Head of caudate nucleus (tissue), 42 donors: ENCODE measurements at regions of chr10 and their contacts with region 1.

Region 1: GRCh38 chr10:132536971-132537712 is 445 bp upstream of the INPP5A start:
- DNase-seq: peak; percentile 100

Region 2: GRCh38 chr10:132307823-132308587 is 229.1 kb before region 1 on chr10 and contains the start of gene STK32C:
- intact Hi-C with region 1: loop called (anchors 10 kb)
- DNase-seq: peak; percentile 80 to 98 (median 94)

Region 3: DNA sequence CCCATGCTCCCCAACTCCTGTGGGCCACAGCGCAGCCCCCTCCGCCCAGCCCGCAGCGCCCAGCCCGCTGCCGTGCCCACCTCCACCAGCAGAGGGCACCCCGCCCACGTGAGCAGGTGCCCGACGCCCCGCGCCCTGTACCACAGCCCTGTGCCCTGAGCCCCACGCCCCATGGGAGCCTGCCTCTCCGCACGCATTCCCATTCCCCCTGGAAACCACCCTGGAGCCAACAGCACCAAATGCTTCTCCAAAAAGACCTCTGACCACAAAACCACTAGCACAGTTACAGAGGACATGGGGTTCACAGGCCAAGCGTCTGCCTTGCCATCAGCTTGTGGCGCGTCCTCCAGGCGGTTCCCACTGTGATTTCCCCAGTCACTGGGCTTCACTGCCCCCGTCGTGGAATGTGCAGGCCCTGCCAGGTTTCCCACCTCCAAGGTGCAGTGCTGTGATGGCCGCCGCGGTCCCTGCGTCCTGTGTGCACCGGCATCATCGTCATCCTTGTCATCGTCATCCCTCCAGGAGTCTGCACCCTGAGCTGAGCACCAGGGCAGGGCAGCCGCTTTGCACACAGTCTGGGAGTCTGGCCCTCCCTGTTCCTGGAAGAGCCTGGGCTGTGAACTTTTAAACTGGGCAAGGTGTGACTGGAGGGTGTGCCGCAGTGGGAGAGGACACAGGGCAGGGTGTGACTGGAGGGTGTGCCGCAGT is 78.4 kb before region 1 on chr10:
- intact Hi-C with region 1: loop called (anchors 5 kb)
- DNase-seq: peak in 41 of 42 donors; percentile 38 to 88 (median 71)

Region 4: GRCh38 chr10:132606536-132607316 is 69.6 kb after region 1 on chr10:
- intact Hi-C with region 1: no loop called
- DNase-seq: peak in 41 of 42 donors; percentile 60 to 91 (median 80)

Region 5: GRCh38 chr10:132643709-132644526 is 106.8 kb after region 1 on chr10:
- intact Hi-C with region 1: loop called (anchors 5 kb)
- DNase-seq: peak in 15 of 42 donors; percentile 2 to 62 (median 30)